Left cardiac atrium (tissue), 4 donors: ENCODE measurements at regions of chr9 and their contacts with region 1.

Region 1: DNA sequence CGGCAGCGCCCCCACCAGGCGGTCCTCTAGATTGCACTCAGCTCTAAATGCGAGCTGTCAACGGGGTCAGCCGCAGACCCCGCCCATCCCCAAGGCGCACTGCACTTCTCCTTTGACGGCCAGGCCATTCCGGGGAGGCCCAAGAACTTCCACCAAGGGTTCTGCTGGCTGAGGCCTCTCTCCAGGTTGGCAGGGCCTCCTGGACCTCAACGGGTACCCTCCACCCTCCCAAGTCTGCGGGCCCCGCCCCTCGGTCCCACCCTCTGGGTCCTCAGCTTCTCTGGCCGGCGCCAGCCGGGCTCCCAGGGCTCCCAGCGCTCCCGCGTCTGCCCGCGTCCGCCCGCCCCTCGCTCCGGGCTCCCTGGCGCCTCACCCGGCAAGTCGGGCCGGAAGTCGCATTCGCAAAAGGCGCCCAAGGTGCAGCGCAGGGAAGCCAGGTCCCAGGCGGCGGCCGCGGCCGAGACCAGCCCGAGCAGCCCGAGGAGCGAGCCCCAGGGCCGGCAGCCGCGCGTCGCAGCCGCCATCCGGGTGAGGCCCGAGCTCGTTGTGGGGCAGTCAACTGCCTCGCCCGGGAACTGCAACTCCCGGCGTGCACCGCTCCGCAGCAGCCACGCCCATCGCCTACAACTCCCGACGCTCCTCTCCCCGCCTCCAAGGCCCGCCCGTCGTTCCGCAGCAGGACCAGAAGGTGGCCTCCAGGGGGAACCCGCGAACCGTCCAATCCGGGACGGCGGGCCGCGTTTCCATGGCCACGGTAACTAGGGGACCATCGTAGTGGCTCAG is at the start of gene TOR2A:
- DNase-seq: peak; percentile 99
- ATAC-seq: peak; percentile 97 to 98
- total RNA-seq, gene TOR2A: 5.1 TPM

Region 2: DNA sequence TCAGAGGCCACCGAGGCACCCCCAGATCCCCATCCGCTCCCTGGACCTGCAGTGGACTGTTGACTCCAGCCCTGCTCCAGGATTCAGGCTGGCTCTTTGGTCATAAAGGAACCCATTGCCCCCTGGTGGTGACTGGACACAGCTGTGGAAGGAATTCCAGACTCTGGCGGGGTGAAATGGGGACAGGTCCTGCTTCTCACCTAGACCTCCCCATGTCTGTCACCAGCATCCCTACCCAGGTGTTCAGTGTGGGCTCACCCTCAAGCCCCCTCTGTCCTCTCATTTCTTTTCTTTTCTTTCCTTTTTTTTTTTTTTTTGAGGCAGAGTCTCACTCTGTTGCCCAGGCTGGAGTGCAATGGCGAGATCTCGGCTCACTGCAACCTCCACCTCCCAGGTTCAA is 148.4 kb before region 1 on chr9:
- intact Hi-C with region 1: loop called in 1 of 2 experiments (anchors 1 kb)
- DNase-seq: peak; percentile 88
- ATAC-seq: peak; percentile 91 to 93

Region 3: DNA sequence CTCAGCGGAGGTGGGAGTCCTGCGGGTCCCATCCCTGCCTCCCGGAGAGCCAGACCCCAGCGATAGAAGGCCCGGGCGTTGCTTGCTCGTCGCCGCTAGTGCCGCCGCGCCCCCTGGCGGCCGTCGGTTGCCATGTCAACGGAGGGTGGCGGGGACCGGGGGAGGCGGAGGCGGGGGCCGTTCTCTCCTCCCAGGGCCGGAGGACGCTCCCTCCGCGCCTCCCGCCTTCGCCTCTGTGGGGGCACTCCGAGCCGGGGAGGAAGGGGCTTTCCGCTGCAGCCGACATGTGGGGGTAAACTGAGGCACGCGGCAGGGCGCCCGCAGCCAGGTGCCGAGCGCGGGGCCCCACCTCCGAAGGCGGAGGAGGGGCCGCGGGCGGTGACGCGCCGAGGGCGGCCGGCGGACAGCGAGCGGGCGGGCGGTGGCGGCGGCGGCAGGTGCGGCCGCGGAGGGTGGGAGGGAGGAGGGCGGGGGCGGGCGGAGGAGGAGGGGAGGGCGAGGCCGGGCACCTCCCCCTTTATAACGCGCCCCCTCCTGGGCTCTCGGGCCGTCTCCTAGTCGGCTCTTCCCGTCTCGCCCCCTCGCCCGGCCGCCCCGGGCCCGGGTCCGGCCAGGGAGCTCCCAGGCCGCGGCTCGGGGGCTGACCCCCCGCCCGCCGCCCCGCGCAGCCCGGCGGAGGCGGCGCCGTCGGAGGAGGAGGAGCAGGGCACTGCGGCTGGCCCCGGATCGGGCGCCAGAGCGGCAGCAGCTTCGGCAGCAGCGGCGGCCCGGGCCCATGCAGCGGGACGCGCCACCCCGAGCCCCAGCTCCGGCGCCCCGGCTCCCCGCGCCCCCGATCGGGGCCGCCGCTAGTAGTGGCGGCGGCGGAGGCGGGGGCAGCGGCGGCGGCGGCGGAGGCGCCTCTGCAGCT is 50.3 kb after region 1 on chr9:
- intact Hi-C with region 1: loop called (anchors 2 to 5 kb)
- DNase-seq: peak; percentile 91
- ATAC-seq: peak; percentile 62 to 64

Region 4: GRCh38 chr9:127869310-127870152 is 134.6 kb after region 1 on chr9:
- intact Hi-C with region 1: loop called in 1 of 2 experiments (anchors 5 kb)
- DNase-seq: peak; percentile 93
- ATAC-seq: peak; percentile 55 to 70

Region 5: DNA sequence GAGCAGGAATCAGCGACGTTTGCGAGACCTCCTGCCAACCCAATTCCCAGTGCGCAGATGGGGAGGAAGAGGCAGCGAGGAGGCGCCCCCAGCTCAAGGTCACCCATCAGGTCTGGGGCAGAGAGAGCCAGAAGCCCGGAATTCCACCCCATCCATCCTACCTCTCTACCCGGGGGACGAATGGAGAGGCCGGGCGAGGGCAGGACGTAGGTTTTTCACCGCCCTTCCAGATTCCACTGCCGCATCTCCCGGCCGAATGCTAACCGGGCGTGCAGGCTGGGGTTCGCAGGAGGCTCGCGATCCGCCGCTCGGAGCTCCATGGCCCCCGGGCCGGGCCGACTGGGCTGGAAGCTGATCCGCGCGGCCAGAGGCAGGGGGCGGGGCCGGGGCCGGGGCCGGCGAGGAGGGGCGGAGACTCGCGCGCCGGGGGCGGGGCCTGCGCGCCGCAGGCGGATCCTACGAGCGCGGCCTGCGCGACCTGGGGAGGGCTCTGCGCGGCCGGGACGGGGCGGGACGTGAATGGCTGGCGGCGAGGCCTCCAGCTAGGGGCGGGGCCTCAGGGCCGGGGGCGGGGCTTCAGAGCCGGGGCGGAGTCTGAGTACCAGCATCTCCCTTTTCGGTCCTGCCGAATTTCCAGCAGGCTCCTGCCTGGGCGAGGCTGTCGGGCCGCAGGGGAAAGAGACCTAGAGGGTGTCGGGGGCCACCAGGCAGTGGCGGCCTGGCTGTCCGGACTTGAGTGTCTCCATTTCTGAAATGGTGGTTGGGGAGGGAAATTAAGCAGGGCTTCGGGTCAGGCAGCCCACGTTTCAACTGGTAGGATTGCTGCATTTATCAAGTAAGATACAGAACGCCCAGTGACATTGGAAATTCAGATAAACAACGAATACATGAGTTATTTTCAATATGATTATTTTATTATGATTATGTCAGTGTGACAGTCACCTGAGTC is 182.0 kb after region 1 on chr9 and contains the start of gene ST6GALNAC4:
- intact Hi-C with region 1: loop called (anchors 5 kb)
- DNase-seq: peak; percentile 94
- ATAC-seq: peak; percentile 94
- total RNA-seq, gene ST6GALNAC4: 35.8 to 49.9 TPM